Heart right ventricle (tissue), 16 donors: ENCODE measurements at regions of chrX and their contacts with region 1.

Region 1: GRCh38 chrX:38282044-38282443 is 45.3 kb downstream of the RPGR start:
- DNase-seq: peak; percentile 4
- ATAC-seq: peak in 4 of 8 donors; percentile 44 to 82 (median 60)
- H3K4me3 ChIP-seq: no peak overlapping the region
- H3K27ac ChIP-seq: no peak overlapping the region
- H3K4me1 ChIP-seq: no peaks in the 10 kb centered on the region
- H3K27me3 ChIP-seq: peaks cover 0 to 7% (median 0%) of the 10 kb centered on the region in 7 donors
- CTCF ChIP-seq: peak; percentile 16 to 59 (median 35)

Region 2: DNA sequence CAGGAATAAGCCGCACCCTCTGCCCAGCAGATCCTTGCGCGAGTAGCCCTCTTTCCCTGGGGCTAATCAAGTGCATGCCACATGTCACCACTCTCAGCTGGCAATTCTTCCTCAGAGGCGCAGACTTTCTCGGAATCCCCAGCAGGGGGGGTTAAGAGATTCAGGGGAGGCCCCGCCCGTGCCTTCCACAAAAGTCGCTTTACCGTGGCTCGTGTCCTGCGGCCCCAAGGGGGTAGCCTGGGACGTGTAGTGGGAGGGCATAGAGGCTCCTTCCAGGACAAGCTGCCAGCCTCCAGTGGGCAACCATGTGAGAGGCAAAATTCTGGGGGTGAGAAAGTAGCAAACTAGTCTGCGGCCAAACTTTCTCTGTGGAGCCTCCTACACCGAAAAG is 62.0 kb before region 1 on chrX:
- intact Hi-C with region 1: loop called in 1 of 10 experiments (anchors 2 kb)
- DNase-seq: peak; percentile 19 to 27
- ATAC-seq: peak; percentile 44 to 84 (median 60)
- H3K4me3 ChIP-seq: peak overlapping the region; percentile 38 to 65 (median 57)
- H3K27ac ChIP-seq: peak overlapping the region in 9 of 10 donors; percentile 56 to 74 (median 63)
- H3K4me1 ChIP-seq: peaks cover 0 to 5% (median 0%) of the 10 kb centered on the region in 9 donors
- H3K27me3 ChIP-seq: peaks cover 0 to 68% (median 0%) of the 10 kb centered on the region in 7 donors
- CTCF ChIP-seq: peak in 5 of 9 donors; percentile 26 to 36 (median 31)